PC-9 (cell line): ENCODE measurements at regions of chr5 and their contacts with region 1.

Region 1: GRCh38 chr5:107121793-107122519 is 548.8 kb downstream of the EFNA5 start:
- DNase-seq: no peak
- H3K4me3 ChIP-seq: no peak overlapping the region
- H3K27ac ChIP-seq: no peak overlapping the region
- H3K4me1 ChIP-seq: no peaks in the 10 kb centered on the region
- H3K27me3 ChIP-seq: no peaks in the 10 kb centered on the region
- CTCF ChIP-seq: no peak

Region 2: GRCh38 chr5:107088907-107089306 is 33.0 kb before region 1 on chr5:
- CTCF ChIA-PET with region 1: no interaction called
- POLR2A ChIA-PET with region 1: no interaction called
- intact Hi-C with region 1: no loop called
- DNase-seq: no peak
- H3K4me3 ChIP-seq: no peak overlapping the region
- H3K27ac ChIP-seq: no peak overlapping the region
- H3K4me1 ChIP-seq: no peaks in the 10 kb centered on the region
- H3K27me3 ChIP-seq: no peaks in the 10 kb centered on the region
- CTCF ChIP-seq: no peak

Region 3: GRCh38 chr5:107422494-107422893 is 300.5 kb after region 1 on chr5:
- CTCF ChIA-PET with region 1: no interaction called
- POLR2A ChIA-PET with region 1: no interaction called
- intact Hi-C with region 1: no loop called
- DNase-seq: no peak
- H3K4me3 ChIP-seq: no peak overlapping the region
- H3K27ac ChIP-seq: no peak overlapping the region
- H3K4me1 ChIP-seq: peaks cover 49% of the 10 kb centered on the region
- H3K27me3 ChIP-seq: no peaks in the 10 kb centered on the region
- CTCF ChIP-seq: no peak

Region 4: GRCh38 chr5:107533910-107534876 is 412.2 kb after region 1 on chr5:
- CTCF ChIA-PET with region 1: no interaction called
- POLR2A ChIA-PET with region 1: interaction called, 13 read pairs
- intact Hi-C with region 1: no loop called
- DNase-seq: no peak
- H3K4me3 ChIP-seq: no peak overlapping the region
- H3K27ac ChIP-seq: no peak overlapping the region
- H3K4me1 ChIP-seq: no peaks in the 10 kb centered on the region
- H3K27me3 ChIP-seq: no peaks in the 10 kb centered on the region
- CTCF ChIP-seq: no peak